Heart right ventricle (tissue), 16 donors: ENCODE measurements at regions of chr19 and their contacts with region 1.

Region 1: DNA sequence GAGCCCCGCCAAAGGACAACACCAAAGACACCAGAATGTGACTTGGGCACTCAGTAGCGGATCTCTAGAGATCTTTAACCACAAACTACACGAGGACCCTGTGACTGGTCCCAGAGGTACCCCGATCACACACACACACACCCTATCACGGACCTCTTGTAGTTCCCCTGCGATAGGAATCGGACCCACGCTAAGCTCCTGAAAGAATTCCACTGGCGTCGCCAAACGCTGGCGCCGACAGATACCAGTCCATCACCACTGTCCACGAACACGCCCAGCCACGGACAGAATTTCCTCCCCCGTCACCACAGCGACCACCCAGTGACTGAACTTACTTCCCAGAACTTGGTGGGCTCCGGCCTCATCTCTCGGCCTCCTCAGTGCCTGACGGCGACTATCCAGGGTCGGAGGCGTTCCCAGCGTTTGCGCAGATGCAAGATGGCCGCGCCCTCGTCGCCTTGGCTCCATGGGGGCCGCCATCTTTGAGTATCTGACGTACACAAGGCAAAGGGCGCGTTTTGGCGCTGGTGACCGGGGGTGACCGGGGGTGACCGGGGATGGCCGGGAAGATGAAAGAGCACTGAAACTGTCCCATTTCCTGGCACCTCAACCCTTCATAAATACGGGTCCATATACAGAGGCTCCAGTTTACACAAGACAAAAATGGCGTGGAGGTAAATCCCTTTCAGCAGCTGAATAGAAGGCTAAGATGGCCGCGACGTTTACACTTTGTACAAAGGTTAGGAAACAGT is at the start of gene ZNF615:
- DNase-seq: peak; percentile 88 to 92
- ATAC-seq: peak; percentile 97 to 100 (median 100)
- H3K4me3 ChIP-seq: peak within 1 kb of the TSS; percentile 60 to 84 (median 80)
- H3K27ac ChIP-seq: peak within 1 kb of the TSS; percentile 62 to 92 (median 88)
- H3K4me1 ChIP-seq: peaks cover 0 to 23% (median 9%) of the 10 kb centered on the region in 9 donors
- H3K27me3 ChIP-seq: no peaks in the 10 kb centered on the region
- CTCF ChIP-seq: no peak
- total RNA-seq, gene ZNF615: 8.1 to 13.7 (median 10.1) TPM

Region 2: GRCh38 chr19:51688672-51689571 is 319.1 kb before region 1 on chr19:
- intact Hi-C with region 1: loop called in 1 of 10 experiments (anchors 5 kb)
- DNase-seq: peak; percentile 93 to 96
- ATAC-seq: peak; percentile 88 to 94 (median 89)
- H3K4me3 ChIP-seq: peak overlapping the region; percentile 63 to 100 (median 90)
- H3K27ac ChIP-seq: peak overlapping the region; percentile 93 to 100 (median 97)
- H3K4me1 ChIP-seq: peaks cover 8 to 51% (median 40%) of the 10 kb centered on the region in 9 donors
- H3K27me3 ChIP-seq: peaks cover 0 to 30% (median 0%) of the 10 kb centered on the region in 7 donors
- CTCF ChIP-seq: peak in 4 of 9 donors; percentile 10 to 31 (median 24)

Region 3: GRCh38 chr19:51986309-51987291 is 21.4 kb before region 1 on chr19 and contains the start of gene ZNF350:
- intact Hi-C with region 1: loop called in 1 of 10 experiments (anchors 2 kb)
- DNase-seq: peak; percentile 84 to 97
- ATAC-seq: peak; percentile 98 to 100 (median 99)
- H3K4me3 ChIP-seq: peak within 1 kb of the TSS; percentile 68 to 93 (median 84)
- H3K27ac ChIP-seq: peak within 1 kb of the TSS in 9 of 10 donors; percentile 34 to 90 (median 76)
- H3K4me1 ChIP-seq: peaks cover 7 to 37% (median 16%) of the 10 kb centered on the region in 9 donors
- H3K27me3 ChIP-seq: no peaks in the 10 kb centered on the region
- CTCF ChIP-seq: no peak
- total RNA-seq, gene ZNF350: 5.3 to 10.1 (median 7.5) TPM

Region 4: GRCh38 chr19:52028027-52028779 is 20.2 kb after region 1 on chr19 and contains the start of gene ZNF614:
- intact Hi-C with region 1: loop called in 3 of 10 experiments (anchors 2 kb)
- DNase-seq: peak; percentile 86 to 90
- ATAC-seq: peak; percentile 98 to 99 (median 98)
- H3K4me3 ChIP-seq: peak within 1 kb of the TSS; percentile 47 to 88 (median 78)
- H3K27ac ChIP-seq: peak within 1 kb of the TSS; percentile 24 to 94 (median 92)
- H3K4me1 ChIP-seq: peaks cover 0 to 21% (median 15%) of the 10 kb centered on the region in 9 donors
- H3K27me3 ChIP-seq: no peaks in the 10 kb centered on the region
- CTCF ChIP-seq: peak in 1 of 9 donors; percentile 16
- total RNA-seq, gene ZNF614: 6.1 to 8.4 (median 6.8) TPM